ENCODE measurements at regions of chr13 and their contacts with region 1.

Region 1: GRCh38 chr13:40102856-40103255 is 447.4 kb downstream of the COG6 start:
- DNase-seq: no peak
- ATAC-seq: peak; percentile 51
- H3K4me3 Mint-ChIP-seq: peak overlapping the region; percentile 64
- H3K27ac Mint-ChIP-seq: peak overlapping the region; percentile 72
- H3K4me1 Mint-ChIP-seq: peaks cover 27% of the 10 kb centered on the region
- H3K27me3 Mint-ChIP-seq: no peaks in the 10 kb centered on the region
- CTCF ChIP-seq: no peak

Region 2: GRCh38 chr13:39787086-39787487 is 315.8 kb before region 1 on chr13:
- CTCF ChIA-PET with region 1: no interaction called
- POLR2A ChIA-PET with region 1: no interaction called
- intact Hi-C with region 1: no loop called
- DNase-seq: no peak
- ATAC-seq: no peak
- H3K4me3 Mint-ChIP-seq: no peak overlapping the region
- H3K27ac Mint-ChIP-seq: no peak overlapping the region
- H3K4me1 Mint-ChIP-seq: no peaks in the 10 kb centered on the region
- H3K27me3 Mint-ChIP-seq: no peaks in the 10 kb centered on the region
- CTCF ChIP-seq: no peak

Region 3: GRCh38 chr13:40130871-40131636 is 28.2 kb after region 1 on chr13:
- CTCF ChIA-PET with region 1: no interaction called
- POLR2A ChIA-PET with region 1: no interaction called
- intact Hi-C with region 1: loop called (anchors 1 kb)
- DNase-seq: no peak
- ATAC-seq: no peak
- H3K4me3 Mint-ChIP-seq: no peak overlapping the region
- H3K27ac Mint-ChIP-seq: no peak overlapping the region
- H3K4me1 Mint-ChIP-seq: peaks cover 37% of the 10 kb centered on the region
- H3K27me3 Mint-ChIP-seq: no peaks in the 10 kb centered on the region
- CTCF ChIP-seq: no peak

Region 4: DNA sequence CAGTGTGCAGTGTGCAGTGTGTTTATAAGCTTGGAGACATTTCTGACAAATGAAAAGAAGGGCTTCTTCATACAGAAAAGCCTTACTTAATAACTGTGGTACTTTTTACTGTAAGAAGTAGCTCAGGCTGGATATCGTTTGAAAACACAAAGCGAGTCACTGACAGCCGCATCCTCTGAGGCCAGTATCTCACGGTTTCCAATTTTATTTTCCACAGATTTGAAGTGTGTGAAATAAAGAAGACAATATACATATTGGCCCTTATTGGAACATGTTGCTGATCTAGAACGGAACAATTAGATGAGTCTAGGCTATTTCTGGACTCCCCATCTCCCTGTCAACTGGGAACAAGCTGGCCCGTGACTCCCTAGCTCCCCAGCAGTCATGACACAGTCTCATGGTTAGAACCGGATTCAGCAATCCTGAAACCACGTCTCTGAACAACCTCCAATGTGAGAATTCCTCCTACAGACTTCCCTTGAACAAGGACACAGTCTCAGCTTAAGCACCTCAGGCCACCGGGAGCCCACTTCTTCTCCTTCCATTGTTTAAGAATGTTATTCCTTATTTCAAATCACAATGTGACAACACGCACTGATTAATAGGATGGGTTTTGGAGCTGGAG is 37.2 kb after region 1 on chr13:
- CTCF ChIA-PET with region 1: no interaction called
- POLR2A ChIA-PET with region 1: no interaction called
- intact Hi-C with region 1: loop called (anchors 5 kb)
- DNase-seq: no peak
- ATAC-seq: no peak
- H3K4me3 Mint-ChIP-seq: no peak overlapping the region
- H3K27ac Mint-ChIP-seq: no peak overlapping the region
- H3K4me1 Mint-ChIP-seq: peaks cover 14% of the 10 kb centered on the region
- H3K27me3 Mint-ChIP-seq: no peaks in the 10 kb centered on the region
- CTCF ChIP-seq: no peak

Region 5: GRCh38 chr13:40158218-40158617 is 55.4 kb after region 1 on chr13:
- CTCF ChIA-PET with region 1: no interaction called
- POLR2A ChIA-PET with region 1: no interaction called
- intact Hi-C with region 1: loop called (anchors 5 kb)
- DNase-seq: no peak
- ATAC-seq: peak; percentile 45
- H3K4me3 Mint-ChIP-seq: no peak overlapping the region
- H3K27ac Mint-ChIP-seq: no peak overlapping the region
- H3K4me1 Mint-ChIP-seq: peaks cover 17% of the 10 kb centered on the region
- H3K27me3 Mint-ChIP-seq: no peaks in the 10 kb centered on the region
- CTCF ChIP-seq: no peak

Region 6: GRCh38 chr13:40206241-40207000 is 103.6 kb after region 1 on chr13:
- CTCF ChIA-PET with region 1: no interaction called
- POLR2A ChIA-PET with region 1: interaction called, 11 read pairs
- intact Hi-C with region 1: loop called (anchors 1 kb)
- DNase-seq: peak; percentile 52
- ATAC-seq: peak; percentile 66
- H3K4me3 Mint-ChIP-seq: peak overlapping the region; percentile 76
- H3K27ac Mint-ChIP-seq: peak overlapping the region; percentile 100
- H3K4me1 Mint-ChIP-seq: peaks cover 72% of the 10 kb centered on the region
- H3K27me3 Mint-ChIP-seq: no peaks in the 10 kb centered on the region
- CTCF ChIP-seq: no peak